WTC11 (cell line): ENCODE measurements at regions of chr4 and their contacts with region 1.

Region 1: DNA sequence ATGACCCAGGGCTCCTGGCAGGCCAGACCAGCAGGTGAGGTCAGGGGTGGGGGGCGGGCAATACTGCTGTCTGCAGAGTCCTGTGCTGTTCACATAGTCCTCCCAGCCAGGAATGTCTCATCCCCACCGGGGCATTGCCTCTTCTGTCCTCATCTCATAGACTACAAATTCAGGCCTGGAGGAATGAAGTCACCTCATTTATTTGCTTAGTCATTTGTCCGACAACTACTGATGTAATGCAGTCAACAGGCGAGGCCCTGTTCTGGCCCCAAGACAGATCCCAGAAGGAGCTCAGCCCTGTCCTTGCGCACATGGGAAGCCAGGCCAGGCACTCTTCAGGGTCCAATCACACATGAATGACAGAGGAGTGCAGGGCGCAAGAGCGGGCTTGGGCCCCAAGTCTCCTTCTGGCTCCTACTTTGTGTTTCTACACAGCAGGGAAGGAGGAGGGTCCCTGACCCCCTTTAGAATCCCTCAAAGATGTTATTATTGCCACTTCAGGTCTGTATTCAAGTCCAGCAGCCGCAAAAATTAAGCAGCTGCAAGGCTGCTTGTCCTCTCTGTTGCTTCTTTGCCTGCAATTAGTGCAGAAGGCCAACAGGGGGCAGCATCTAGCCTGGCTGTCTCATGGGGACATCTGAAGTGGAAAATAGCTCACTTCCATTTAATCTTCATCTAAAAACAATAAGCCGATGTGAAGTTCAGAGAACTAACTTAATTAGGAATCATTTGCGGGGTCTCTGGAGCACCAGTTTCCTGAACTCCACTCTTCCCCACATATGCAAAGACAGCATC is 15.2 kb upstream of the HMX1 start:
- DNase-seq: no peak
- ATAC-seq: no peak
- H3K4me3 Mint-ChIP-seq: no peak overlapping the region
- H3K27ac Mint-ChIP-seq: no peak overlapping the region
- H3K4me1 Mint-ChIP-seq: peaks cover 19% of the 10 kb centered on the region
- H3K27me3 Mint-ChIP-seq: peaks cover 97% of the 10 kb centered on the region
- CTCF ChIP-seq: peak; percentile 60

Region 2: DNA sequence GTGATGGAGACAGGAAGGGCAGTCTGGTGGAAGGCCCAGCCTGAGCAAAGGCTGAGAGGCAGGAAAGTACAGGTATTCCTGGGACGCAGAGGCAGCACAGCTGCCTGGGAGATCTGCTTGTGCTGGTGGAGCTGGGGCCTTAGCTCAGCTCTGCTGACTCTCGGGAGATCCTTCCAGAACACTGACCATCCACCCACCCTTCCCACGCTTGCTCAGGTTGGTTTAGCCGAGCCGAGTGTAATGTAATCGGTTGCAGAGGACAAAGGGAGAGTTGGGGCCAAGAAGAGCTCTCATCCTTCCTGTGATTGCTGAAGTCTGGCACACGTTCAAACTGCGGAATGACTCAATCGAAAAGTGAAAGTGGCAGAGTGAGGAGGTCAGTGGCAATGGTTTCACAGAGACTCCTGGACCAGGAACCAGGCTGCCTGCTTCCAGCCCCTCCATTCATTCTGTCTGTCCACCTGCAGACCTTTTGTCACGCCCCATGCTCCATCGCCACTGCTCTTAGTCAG is 349.7 kb before region 1 on chr4:
- CTCF ChIA-PET with region 1: no interaction called
- POLR2A ChIA-PET with region 1: no interaction called
- DNase-seq: no peak
- ATAC-seq: no peak
- H3K4me3 Mint-ChIP-seq: no peak overlapping the region
- H3K27ac Mint-ChIP-seq: no peak overlapping the region
- H3K4me1 Mint-ChIP-seq: peaks cover 34% of the 10 kb centered on the region
- H3K27me3 Mint-ChIP-seq: no peaks in the 10 kb centered on the region; the same call in 1 of the 2 replicates
- CTCF ChIP-seq: no peak

Region 3: DNA sequence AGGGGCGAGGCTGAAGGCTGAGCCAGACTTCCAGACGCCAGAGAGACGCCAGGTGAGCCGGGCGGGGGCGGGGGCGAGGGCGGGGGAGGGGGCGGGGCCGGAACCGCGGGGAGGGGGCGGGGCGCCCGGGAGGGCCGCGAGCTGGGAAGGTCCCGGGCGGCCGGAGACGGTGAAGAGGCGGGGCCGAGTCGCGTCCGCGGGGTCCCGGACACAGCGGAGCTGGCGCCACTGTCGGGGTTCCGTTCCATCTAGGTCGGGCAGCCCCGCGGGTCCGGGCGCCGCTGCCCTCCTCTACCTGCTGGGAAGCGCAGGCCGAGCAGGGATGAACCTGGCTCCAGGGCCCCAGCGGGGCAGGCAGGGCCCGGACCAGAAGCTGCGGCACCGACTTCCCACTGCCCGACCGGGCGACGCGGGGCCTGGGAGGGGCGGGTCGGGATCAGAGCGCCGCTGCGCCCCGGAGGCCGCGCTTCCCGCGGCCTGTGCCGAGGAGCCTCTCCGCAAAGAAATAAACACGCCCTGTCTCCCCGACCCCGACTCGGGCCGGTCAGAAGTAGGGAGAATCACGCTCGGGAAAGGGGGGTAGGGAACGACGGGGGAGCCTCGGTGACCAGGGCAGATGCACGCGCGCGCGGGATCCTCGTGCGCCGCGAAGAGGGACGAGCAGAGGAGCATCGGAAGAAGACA is 25.8 kb before region 1 on chr4:
- CTCF ChIA-PET with region 1: interaction called, 14 read pairs
- POLR2A ChIA-PET with region 1: interaction called, 6 read pairs
- DNase-seq: peak; percentile 71
- ATAC-seq: peak; percentile 29
- H3K4me3 Mint-ChIP-seq: peak overlapping the region; percentile 73
- H3K27ac Mint-ChIP-seq: no peak overlapping the region
- H3K4me1 Mint-ChIP-seq: peaks cover 19% of the 10 kb centered on the region
- H3K27me3 Mint-ChIP-seq: peaks cover 99% of the 10 kb centered on the region
- CTCF ChIP-seq: no peak

Region 4: GRCh38 chr4:8897251-8898167 is 10.7 kb after region 1 on chr4:
- CTCF ChIA-PET with region 1: interaction called, 22 read pairs
- POLR2A ChIA-PET with region 1: interaction called, 3 read pairs
- DNase-seq: no peak
- ATAC-seq: no peak
- H3K4me3 Mint-ChIP-seq: no peak overlapping the region
- H3K27ac Mint-ChIP-seq: no peak overlapping the region
- H3K4me1 Mint-ChIP-seq: peaks cover 27% of the 10 kb centered on the region
- H3K27me3 Mint-ChIP-seq: peaks cover 72% of the 10 kb centered on the region
- CTCF ChIP-seq: no peak